IMR-90 (cell line): ENCODE measurements at regions of chr2 and their contacts with region 1.

Region 1: DNA sequence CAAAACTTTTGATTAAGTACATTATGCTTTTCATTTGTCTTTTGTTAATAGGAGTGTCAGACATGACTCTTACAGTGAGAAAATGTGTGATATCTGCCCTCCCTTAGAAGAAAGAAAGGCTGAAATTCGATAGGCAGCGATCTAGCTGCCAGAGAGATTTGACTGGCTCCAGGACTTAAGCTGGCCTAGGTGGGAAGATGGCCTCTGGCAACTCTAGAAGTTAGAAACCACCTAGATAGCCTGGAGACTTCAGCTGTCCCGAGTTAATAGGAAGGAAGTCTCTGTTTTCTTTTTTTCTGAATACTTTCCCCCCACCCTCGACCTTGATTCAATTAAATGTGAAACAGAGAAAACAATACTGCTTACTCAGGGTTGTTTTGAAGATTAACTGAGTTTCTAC is 1194.7 kb upstream of the CRIM1 start:
- DNase-seq: no peak
- ATAC-seq: no peak
- H3K4me3 ChIP-seq: no peak overlapping the region
- H3K27ac ChIP-seq: no peak overlapping the region
- H3K4me1 ChIP-seq: no peaks in the 10 kb centered on the region
- H3K27me3 ChIP-seq: no peaks in the 10 kb centered on the region
- CTCF ChIP-seq: no peak
- POLR2A ChIP-seq: no peak
- RAD21 ChIP-seq: no peak

Region 2: DNA sequence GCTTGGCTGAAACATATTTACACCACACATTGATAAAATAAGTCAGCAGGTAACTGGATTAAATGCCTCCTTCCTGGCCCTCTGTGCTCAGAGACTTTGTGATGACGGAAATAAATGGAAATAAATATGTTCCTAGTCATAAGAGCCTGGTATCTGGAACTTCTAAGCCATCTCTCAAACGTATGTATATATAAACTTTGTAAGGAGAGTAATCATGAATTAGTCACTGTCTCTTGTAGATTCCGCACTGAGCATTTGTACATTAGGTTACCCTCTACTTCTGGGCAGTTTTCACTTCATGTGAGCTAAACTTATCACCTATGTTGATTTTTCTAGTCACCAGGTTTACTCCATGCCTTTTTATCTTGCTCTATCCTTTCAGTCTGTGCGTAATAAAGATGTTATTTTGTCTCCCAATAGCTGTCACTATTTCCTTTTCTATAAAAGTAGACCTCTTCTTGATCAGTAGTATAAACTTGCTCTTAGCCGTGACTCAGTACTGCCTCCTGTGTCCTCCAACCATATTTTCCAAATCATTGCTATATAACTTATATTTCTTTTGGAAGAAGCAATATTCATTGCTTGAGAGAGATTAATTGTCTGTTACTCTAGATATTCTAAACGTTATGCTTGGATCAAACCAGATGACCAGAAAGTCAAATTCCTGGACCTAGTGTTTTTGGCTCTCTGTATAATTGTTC is 1383.9 kb after region 1 on chr2:
- CTCF ChIA-PET with region 1: no interaction called
- POLR2A ChIA-PET with region 1: no interaction called
- dilution Hi-C with region 1: no loop called
- in situ Hi-C with region 1: no loop called
- intact Hi-C with region 1: loop called (anchors 5 kb)
- DNase-seq: peak; percentile 52
- ATAC-seq: peak; percentile 33; the same call in 1 of the 2 replicates
- H3K4me3 ChIP-seq: no peak overlapping the region
- H3K27ac ChIP-seq: no peak overlapping the region
- H3K4me1 ChIP-seq: peaks cover 9% of the 10 kb centered on the region
- H3K27me3 ChIP-seq: no peaks in the 10 kb centered on the region
- CTCF ChIP-seq: peak; percentile 44
- POLR2A ChIP-seq: no peak
- RAD21 ChIP-seq: no peak